ENCODE measurements at regions of chr17 and their contacts with region 1.

Region 1: DNA sequence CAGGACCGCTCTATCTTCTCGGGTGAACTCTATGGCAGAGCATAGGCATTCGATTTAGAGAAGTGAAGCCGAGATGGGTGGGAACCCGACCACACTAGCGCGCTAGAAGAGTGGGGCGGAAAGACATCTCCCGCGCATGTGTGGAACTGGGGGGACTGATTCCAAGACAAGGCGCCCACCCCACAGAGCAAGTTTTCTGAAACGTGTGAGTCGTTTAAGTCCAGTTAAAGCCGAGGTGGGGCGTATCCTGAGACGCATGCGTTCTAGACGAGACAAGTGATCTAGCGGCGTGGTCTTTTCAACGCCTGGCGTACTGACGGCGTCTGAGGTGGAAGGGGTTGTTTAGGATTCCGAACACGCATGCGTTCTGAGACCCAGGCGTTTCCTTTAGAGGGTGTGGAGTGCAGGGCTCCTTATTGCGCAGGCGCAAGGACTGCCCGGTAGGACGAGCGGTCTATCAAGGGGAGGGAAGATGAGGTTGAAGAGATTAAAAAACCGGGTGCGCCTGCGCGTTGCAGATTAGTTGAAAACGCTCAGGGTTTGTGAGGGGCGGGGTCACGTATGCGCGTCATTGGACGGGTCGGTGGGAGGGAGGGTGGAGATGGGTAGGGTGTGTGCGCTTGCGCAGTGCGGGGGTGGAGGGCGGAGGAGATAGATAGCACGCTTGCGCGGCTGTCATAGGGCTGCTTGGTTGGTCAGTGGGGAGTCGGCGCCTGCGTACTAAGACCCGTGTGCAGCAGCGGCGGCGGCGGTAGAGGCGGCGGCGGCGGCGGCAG is at the start of gene EIF5A:
- DNase-seq: peak; percentile 99 to 100 (median 99)

Region 2: GRCh38 chr17:7252176-7253043 is 54.7 kb before region 1 on chr17 and contains the start of gene ELP5:
- intact Hi-C with region 1: loop called (anchors 2 kb)
- DNase-seq: peak; percentile 84 to 98 (median 90)

Region 3: GRCh38 chr17:7329374-7329996 is 22.4 kb after region 1 on chr17:
- intact Hi-C with region 1: loop called (anchors 2 kb)
- DNase-seq: peak; percentile 94 to 99 (median 97)

Region 4: GRCh38 chr17:7351665-7352501 is 44.8 kb after region 1 on chr17 and contains the start of gene KCTD11:
- intact Hi-C with region 1: no loop called
- DNase-seq: peak; percentile 73 to 97 (median 80)